K562 (cell line): ENCODE measurements at regions of chr10 and their contacts with region 1.

Region 1: DNA sequence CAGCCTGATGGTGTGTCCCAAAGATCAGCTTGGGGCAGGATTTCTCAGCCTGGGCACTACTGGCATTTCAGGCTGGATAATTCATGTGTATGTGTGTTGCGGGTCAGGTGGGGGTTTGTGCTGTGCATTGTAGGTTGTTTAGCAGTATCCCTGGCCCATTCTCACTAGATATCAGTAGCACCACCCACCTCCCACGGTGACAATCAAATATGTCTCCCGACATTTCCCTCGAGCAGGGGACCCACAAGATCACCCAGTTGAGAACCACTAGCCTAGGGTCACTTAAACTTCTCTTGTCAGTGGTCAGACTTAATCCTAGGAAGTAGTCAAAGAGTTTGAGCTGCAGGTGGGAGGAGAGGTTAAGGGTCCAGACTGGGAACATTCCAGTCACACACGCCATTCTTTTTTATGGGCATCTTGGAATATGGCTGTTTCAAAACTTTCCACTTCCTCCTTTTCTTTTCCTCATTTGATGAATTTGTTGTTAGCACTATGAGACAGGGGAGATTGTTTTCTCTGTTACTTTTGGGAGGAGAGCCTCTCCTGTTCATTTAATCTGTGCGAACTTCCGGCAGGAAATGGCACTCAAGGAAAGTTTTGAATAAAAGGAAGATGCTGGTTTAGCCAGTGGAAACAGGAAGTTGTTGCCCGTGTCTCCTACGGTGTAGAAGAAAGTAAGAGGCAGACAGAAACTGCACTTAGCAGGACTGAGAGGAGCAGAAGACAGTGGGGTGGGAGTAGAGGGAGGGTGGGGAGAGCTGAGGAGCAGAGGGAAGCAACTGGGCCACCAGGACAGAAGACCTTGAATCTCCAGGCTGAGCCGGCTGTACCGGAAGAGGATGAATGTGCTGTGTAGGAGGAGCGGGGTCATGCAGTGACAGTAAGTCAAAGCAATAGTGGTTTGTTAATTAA is 17.6 kb upstream of the EXOC6 start:
- DNase-seq: peak; percentile 26 to 77 (median 37)
- ATAC-seq: peak; percentile 69
- H3K4me3 ChIP-seq: peak overlapping the region; percentile 40
- H3K27ac ChIP-seq: peak overlapping the region; percentile 96
- H3K4me1 ChIP-seq: peaks cover 7 to 18% of the 10 kb centered on the region in 2 experiments; a peak in 4 of 5 replicates
- H3K27me3 ChIP-seq: no peaks in the 10 kb centered on the region
- CTCF ChIP-seq: no peak
- EP300 ChIP-seq: no peak
- POLR2A ChIP-seq: peak; percentile 64
- RAD21 ChIP-seq: no peak

Region 2: GRCh38 chr10:92689663-92690210 is 141.0 kb before region 1 on chr10 and contains the start of gene HHEX:
- CTCF ChIA-PET with region 1: no interaction called
- POLR2A ChIA-PET with region 1: interaction called, 3 read pairs
- in situ Hi-C with region 1: loop called (anchors 5 kb)
- intact Hi-C with region 1: loop called (anchors 2 kb)
- DNase-seq: peak; percentile 83 to 89 (median 87)
- ATAC-seq: peak; percentile 79
- H3K4me3 ChIP-seq: peak within 1 kb of the TSS; percentile 93
- H3K27ac ChIP-seq: peak within 1 kb of the TSS; percentile 91
- H3K4me1 ChIP-seq: peaks cover 7 to 33% of the 10 kb centered on the region in 2 experiments; a peak in 4 of 5 replicates
- H3K27me3 ChIP-seq: no peaks in the 10 kb centered on the region
- CTCF ChIP-seq: no peak
- EP300 ChIP-seq: no peak
- POLR2A ChIP-seq: peak; percentile 64; the same call in 1 of the 2 replicates
- RAD21 ChIP-seq: no peak
- polyA plus RNA-seq, gene HHEX: 37.2 to 51.4 TPM

Region 3: DNA sequence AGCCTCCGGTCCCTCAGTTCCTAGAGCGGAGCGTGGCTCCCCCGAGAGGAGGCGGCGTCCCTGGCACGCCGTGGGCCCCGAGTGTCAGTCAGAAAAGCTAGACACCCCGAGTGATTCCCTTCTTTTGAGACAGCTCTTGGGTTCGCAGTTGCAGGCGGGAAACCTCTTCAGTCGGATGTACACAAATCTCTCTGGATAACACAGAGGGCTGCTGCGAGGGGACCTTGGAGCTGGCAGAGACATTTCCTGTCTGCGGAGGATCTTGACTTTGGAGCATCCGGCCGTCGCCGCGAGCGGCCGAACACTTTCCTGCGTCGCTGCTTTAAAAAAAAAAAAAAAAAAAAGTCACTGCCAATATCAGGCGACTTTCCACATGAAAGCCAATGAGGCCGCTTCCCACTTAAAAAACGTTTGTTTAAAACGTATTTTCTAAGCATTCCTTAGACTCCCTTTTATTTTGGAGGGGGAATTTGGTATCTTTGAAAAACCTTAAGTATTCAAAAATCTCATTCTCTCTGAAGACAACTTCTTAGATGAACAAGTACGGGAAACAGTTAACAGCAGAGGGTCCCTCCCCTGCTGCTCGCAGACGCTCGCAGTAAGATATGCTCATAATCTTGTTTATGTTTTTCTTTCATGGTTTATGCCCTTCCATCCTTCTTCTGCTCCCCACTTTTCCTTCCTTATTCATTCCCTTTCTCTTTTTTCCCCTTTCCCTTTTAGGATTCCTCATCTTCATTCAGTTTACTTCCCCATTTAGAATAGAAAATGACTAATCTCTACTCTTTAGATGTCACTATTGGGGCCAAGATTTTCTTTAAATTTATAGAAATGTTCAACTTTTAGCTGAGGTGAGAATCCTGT is 131.0 kb before region 1 on chr10:
- CTCF ChIA-PET with region 1: no interaction called
- POLR2A ChIA-PET with region 1: interaction called, 3 read pairs
- in situ Hi-C with region 1: loop called (anchors 5 kb)
- intact Hi-C with region 1: loop called (anchors 2 kb)
- DNase-seq: peak in 2 of 4 experiments; percentile 49 to 78
- ATAC-seq: peak; percentile 50
- H3K4me3 ChIP-seq: peak overlapping the region; percentile 37
- H3K27ac ChIP-seq: peak overlapping the region; percentile 87
- H3K4me1 ChIP-seq: peaks cover 19 to 31% of the 10 kb centered on the region in 2 experiments; a peak in 4 of 5 replicates
- H3K27me3 ChIP-seq: no peaks in the 10 kb centered on the region
- CTCF ChIP-seq: no peak
- EP300 ChIP-seq: no peak
- POLR2A ChIP-seq: peak; percentile 64
- RAD21 ChIP-seq: no peak

Region 4: GRCh38 chr10:92757066-92757710 is 73.5 kb before region 1 on chr10:
- CTCF ChIA-PET with region 1: no interaction called
- POLR2A ChIA-PET with region 1: interaction called, 5 read pairs
- in situ Hi-C with region 1: no loop called
- intact Hi-C with region 1: loop called (anchors 2 kb)
- DNase-seq: peak; percentile 38 to 90 (median 58)
- ATAC-seq: peak; percentile 81
- H3K4me3 ChIP-seq: peak overlapping the region; percentile 18
- H3K27ac ChIP-seq: peak overlapping the region; percentile 97
- H3K4me1 ChIP-seq: peaks cover 15 to 62% of the 10 kb centered on the region in 2 experiments
- H3K27me3 ChIP-seq: no peaks in the 10 kb centered on the region
- CTCF ChIP-seq: peak; percentile 41 to 50 (median 46); a peak in 5 of 6 replicates
- EP300 ChIP-seq: peak; percentile 70
- POLR2A ChIP-seq: 0 out of 2 replicates have a peak, but pooled peaks have one; percentile 52
- RAD21 ChIP-seq: peak; percentile 13 to 28; a peak in 1 of 4 replicates

Region 5: DNA sequence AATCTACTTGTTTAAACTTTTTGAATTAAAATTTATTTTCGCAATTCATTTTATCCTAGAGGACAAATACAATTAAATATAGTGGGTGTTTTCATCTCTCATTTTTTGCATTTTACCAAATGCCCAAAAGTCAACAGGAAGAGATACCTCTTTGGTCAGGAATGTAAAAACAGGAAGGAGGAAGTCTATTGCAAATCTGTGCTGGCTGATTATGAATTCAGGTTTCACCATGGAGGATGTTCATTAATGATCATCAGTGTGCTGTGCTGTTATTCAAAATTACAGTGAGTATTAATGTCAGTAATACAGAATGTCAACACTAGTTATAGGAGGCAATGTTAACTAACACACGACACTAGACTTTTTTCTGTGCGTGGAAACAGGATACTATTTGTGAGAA is 42.3 kb after region 1 on chr10:
- CTCF ChIA-PET with region 1: no interaction called
- POLR2A ChIA-PET with region 1: no interaction called
- in situ Hi-C with region 1: no loop called
- intact Hi-C with region 1: no loop called
- DNase-seq: no peak
- ATAC-seq: no peak
- H3K4me3 ChIP-seq: no peak overlapping the region
- H3K27ac ChIP-seq: no peak overlapping the region
- H3K4me1 ChIP-seq: peaks cover 0 to 14% of the 10 kb centered on the region in 2 experiments; a peak in 3 of 5 replicates
- H3K27me3 ChIP-seq: no peaks in the 10 kb centered on the region
- CTCF ChIP-seq: no peak
- EP300 ChIP-seq: no peak
- POLR2A ChIP-seq: no peak
- RAD21 ChIP-seq: no peak